ENCODE measurements at regions of chr20 and their contacts with region 1.

Region 1: DNA sequence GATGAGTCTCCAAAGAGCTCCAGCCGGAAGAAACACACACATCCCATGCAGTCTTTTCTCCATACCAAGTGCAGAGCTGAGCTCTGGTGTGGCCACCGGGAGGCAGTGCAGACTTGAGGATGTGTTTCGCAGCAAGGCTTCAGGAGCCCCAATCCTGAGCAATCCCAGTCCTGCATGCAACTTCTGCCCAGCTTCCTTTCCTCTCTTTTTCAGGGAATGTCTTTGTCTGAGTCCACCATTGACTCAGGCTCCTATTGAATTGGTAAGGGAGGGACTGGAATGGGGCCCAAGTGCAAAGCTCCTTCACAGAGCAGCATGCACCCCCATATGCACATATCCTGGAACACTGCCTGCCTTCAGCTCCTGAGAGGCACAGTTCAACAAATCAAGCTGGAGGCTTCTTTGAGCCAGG is 50.5 kb upstream of the ASIP start:
- DNase-seq: peak; percentile 84
- ATAC-seq: peak; percentile 100
- H3K4me3 ChIP-seq: no peak overlapping the region
- H3K27ac ChIP-seq: no peak overlapping the region
- H3K4me1 ChIP-seq: no peaks in the 10 kb centered on the region
- H3K27me3 ChIP-seq: peaks cover 26% of the 10 kb centered on the region
- CTCF ChIP-seq: peak; percentile 91

Region 2: DNA sequence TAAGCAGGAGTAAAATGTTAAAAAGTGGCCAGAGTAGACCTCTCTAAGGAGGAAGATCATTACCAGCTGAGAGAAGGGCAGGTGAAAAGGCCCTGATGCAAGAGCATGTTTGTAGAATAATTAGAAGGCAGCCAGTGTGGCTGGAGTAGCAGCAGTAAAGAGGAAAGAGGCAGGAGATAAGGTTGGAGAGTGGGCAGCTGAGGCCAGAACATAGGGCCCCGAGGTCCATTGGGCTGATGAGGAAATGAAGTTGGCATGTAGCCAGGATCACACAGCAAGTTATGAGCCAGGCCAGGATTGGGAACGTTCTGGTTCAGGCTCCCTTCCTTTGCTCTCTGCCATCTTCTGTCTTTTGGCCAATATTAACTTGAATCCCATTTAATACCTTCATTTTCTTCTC is 145.4 kb before region 1 on chr20:
- CTCF ChIA-PET with region 1: no interaction called
- POLR2A ChIA-PET with region 1: no interaction called
- intact Hi-C with region 1: no loop called
- DNase-seq: no peak
- ATAC-seq: no peak
- H3K4me3 ChIP-seq: no peak overlapping the region
- H3K27ac ChIP-seq: no peak overlapping the region
- H3K4me1 ChIP-seq: no peaks in the 10 kb centered on the region
- H3K27me3 ChIP-seq: no peaks in the 10 kb centered on the region
- CTCF ChIP-seq: no peak

Region 3: DNA sequence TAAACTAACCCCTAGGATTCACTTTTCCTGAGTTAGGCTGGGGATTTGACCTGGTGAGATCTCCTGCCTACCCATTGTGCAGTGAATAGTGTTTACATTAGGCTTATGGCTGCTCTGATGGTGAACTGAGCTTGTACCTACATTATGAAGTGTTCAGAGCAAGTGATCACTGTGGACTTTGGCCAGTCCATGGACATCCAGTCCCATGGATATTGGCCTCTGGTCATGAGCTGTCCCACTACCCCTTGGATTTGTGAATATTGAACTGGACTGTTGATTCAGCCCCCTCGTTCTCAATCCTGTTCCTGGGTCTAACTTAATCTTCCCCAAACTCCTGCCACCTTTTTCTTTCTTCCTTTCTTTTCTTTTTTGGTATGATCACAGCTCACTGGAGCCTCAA is 64.3 kb after region 1 on chr20:
- CTCF ChIA-PET with region 1: interaction called, 5 read pairs
- POLR2A ChIA-PET with region 1: no interaction called
- intact Hi-C with region 1: loop called (anchors 2 kb)
- DNase-seq: no peak
- ATAC-seq: no peak
- H3K4me3 ChIP-seq: no peak overlapping the region
- H3K27ac ChIP-seq: no peak overlapping the region
- H3K4me1 ChIP-seq: no peaks in the 10 kb centered on the region
- H3K27me3 ChIP-seq: no peaks in the 10 kb centered on the region
- CTCF ChIP-seq: no peak

Region 4: GRCh38 chr20:34302723-34303528 is 112.2 kb after region 1 on chr20 and contains the start of gene AHCY:
- CTCF ChIA-PET with region 1: no interaction called
- POLR2A ChIA-PET with region 1: no interaction called
- intact Hi-C with region 1: loop called (anchors 2 kb)
- DNase-seq: peak; percentile 99
- ATAC-seq: peak; percentile 96
- H3K4me3 ChIP-seq: peak within 1 kb of the TSS; percentile 91
- H3K27ac ChIP-seq: peak within 1 kb of the TSS; percentile 81
- H3K4me1 ChIP-seq: peaks cover 26% of the 10 kb centered on the region
- H3K27me3 ChIP-seq: no peaks in the 10 kb centered on the region
- CTCF ChIP-seq: 0 out of 2 replicates have a peak, but pooled peaks have one; percentile 13
- total RNA-seq, gene AHCY: 265 and 267 TPM in 2 replicates